ENCODE measurements at regions of chr12 and their contacts with region 1.

Region 1: DNA sequence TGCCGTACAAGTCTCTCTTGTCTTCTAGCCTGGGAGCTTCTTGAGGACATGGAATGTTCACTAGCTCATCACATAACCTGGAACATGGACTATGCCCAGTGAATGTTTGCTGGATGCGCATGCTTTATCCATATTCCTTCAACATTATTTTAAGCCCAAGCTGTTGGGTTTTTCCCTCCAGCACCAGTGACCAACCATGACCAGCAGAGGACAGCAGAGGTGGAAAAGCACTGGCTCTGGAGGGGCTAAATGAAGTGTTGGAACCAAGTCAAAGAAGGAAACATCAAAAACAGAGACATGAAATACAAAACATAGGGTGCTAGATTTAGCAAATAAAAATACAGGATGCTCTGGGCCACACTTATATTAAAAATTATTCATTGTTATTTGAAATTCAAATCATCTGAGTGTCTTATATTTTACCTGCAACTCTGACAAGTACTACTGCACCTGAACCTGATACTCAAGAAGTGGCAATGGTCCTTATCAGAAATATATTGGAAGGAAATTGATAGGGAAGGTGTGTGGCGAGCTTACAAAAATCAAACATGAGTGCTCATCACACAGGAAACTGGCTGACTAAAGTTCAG is 23.1 kb upstream of the HELB start:
- DNase-seq: peak in 1 of 2 donors; percentile 75
- ATAC-seq: peak; percentile 56 to 69 (median 66)
- H3K4me3 ChIP-seq: no peak overlapping the region
- H3K4me3 Mint-ChIP-seq: no peak overlapping the region
- H3K27ac ChIP-seq: no peak overlapping the region
- H3K27ac Mint-ChIP-seq: no peak overlapping the region
- H3K4me1 ChIP-seq: peaks cover 10% of the 10 kb centered on the region
- H3K4me1 Mint-ChIP-seq: peaks cover 0 to 4% of the 10 kb centered on the region in 2 donors
- H3K27me3 ChIP-seq: no peaks in the 10 kb centered on the region
- H3K27me3 Mint-ChIP-seq: peaks cover 0 to 8% of the 10 kb centered on the region in 2 donors
- CTCF ChIP-seq: peak; percentile 51

Region 2: DNA sequence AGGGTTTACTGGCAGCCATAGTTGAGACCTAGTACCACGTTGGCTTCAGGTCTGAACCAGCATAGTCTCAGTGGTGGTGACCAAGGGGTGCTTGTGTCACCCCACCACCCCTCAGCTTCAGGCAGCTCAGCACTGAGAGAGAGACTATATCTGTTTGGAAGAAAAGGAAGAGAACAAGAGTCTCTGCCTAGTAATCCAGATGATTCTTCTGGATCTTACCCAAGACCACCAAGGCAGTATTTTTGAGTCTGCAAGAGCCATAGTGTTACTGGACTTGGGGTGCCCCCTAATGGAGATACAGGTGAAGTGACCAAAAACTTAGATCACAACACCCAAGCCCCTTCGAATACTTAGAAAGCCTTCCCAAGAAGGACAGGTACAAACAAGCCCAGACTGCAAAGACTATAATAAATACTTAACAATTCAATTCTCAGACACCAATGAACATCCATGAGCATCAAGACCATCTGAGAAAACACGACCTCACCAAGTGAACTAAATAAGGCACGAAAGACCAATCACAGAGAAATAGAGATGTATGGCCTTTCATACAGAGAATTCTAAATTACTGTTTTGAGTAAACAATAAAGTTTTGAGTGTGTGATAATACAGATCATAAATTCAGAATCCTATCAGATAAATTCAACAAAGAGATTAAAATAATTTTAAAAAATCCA is 130.1 kb after region 1 on chr12:
- intact Hi-C with region 1: loop called (anchors 2 kb)
- DNase-seq: peak in 1 of 2 donors; percentile 74
- ATAC-seq: peak; percentile 46 to 58 (median 53)
- H3K4me3 ChIP-seq: no peak overlapping the region
- H3K4me3 Mint-ChIP-seq: no peak overlapping the region
- H3K27ac ChIP-seq: no peak overlapping the region
- H3K27ac Mint-ChIP-seq: no peak overlapping the region
- H3K4me1 ChIP-seq: no peaks in the 10 kb centered on the region
- H3K4me1 Mint-ChIP-seq: no peaks in the 10 kb centered on the region
- H3K27me3 ChIP-seq: no peaks in the 10 kb centered on the region
- H3K27me3 Mint-ChIP-seq: peaks cover 17 to 25% of the 10 kb centered on the region in 2 donors
- CTCF ChIP-seq: peak; percentile 70

Region 3: GRCh38 chr12:66999141-66999540 is 719.9 kb after region 1 on chr12:
- intact Hi-C with region 1: no loop called
- DNase-seq: no peak
- ATAC-seq: no peak
- H3K4me3 ChIP-seq: no peak overlapping the region
- H3K4me3 Mint-ChIP-seq: no peak overlapping the region
- H3K27ac ChIP-seq: no peak overlapping the region
- H3K27ac Mint-ChIP-seq: no peak overlapping the region
- H3K4me1 ChIP-seq: no peaks in the 10 kb centered on the region
- H3K4me1 Mint-ChIP-seq: no peaks in the 10 kb centered on the region
- H3K27me3 ChIP-seq: peaks cover 2% of the 10 kb centered on the region
- H3K27me3 Mint-ChIP-seq: peaks cover 0 to 3% of the 10 kb centered on the region in 2 donors
- CTCF ChIP-seq: no peak